BJ (cell line): ENCODE measurements at regions of chr12 and their contacts with region 1.

Region 1: GRCh38 chr12:52213512-52214420 is 19.3 kb upstream of the KRT7 start:
- DNase-seq: no peak
- H3K4me3 ChIP-seq: no peak overlapping the region
- H3K27me3 ChIP-seq: no peaks in the 10 kb centered on the region
- CTCF ChIP-seq: peak; percentile 100

Region 2: GRCh38 chr12:52069327-52070184 is 144.2 kb before region 1 on chr12 and contains the start of gene ATG101:
- CTCF ChIA-PET with region 1: no interaction called
- POLR2A ChIA-PET with region 1: no interaction called
- DNase-seq: peak; percentile 45
- H3K4me3 ChIP-seq: peak within 1 kb of the TSS; percentile 58
- H3K27me3 ChIP-seq: no peaks in the 10 kb centered on the region
- CTCF ChIP-seq: peak; percentile 91
- polyA plus RNA-seq, gene ATG101: 115 and 163 TPM in 2 replicates

Region 3: DNA sequence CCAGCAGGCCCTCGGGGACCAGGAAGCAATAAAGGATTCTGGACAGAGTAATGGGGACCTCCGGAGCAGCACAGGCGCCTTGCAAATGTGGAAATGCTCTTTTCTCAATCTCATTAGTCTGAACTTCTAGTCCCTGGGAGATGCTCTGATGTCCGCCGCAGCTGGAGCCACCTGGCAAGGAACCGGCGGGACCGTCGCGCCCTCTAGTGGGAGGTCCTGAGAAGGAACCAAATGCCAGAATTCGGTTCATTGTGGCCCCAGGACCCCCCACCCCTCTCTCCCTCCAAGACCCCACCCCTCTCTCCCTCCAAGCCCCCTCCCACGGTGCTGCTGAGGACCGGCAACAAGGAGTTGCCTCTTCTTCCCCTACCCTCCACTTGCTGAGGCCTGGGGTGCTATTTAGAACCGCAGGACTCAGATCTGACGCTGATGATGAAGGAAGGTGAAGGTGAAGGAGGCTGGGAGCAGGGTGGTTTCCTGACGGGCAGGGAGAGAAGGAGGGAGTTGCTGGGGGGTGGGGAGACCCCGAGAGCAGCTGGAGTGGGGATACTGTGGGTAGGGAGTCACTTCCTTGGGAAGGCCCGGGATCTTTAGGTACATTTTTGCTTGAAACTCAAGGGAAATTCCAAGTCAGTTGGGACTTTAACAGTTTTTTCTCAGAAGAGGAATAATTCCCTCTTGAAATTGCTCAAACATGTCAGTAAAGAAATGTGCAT is 91.8 kb before region 1 on chr12:
- CTCF ChIA-PET with region 1: no interaction called
- POLR2A ChIA-PET with region 1: no interaction called
- DNase-seq: no peak
- H3K4me3 ChIP-seq: no peak overlapping the region
- H3K27me3 ChIP-seq: peaks cover 2% of the 10 kb centered on the region
- CTCF ChIP-seq: peak; percentile 83

Region 4: DNA sequence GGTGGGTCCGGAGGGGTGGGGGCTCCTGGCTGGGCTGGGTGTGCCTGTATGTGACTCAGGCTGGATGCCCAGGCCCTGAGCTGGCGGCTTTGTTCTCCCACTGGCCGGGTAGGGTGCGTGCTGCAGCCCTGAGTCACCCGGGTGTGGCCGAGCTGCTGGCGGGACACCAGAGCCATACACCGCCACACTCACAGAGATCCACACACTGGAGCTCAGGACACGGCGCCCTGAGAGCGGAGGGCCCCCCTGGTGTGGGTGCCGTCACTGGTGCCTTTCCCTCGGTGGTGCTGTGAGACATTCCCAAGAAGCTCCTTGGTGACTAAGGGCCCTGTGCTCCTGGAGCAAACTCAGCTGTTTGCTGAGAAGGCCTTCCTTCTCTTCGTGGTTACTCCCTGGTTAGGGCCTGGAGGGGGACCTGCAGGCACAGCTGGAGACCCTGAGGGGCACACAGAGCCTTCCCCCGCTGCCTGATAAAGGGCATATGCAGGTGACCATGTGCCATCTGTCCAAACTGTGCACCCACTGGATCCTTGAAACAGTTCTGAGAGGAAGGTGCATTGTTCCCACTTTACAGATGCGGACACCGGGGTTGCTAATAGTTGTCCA is 66.3 kb before region 1 on chr12:
- CTCF ChIA-PET with region 1: interaction called, 22 read pairs
- POLR2A ChIA-PET with region 1: no interaction called
- DNase-seq: peak; percentile 97
- H3K4me3 ChIP-seq: no peak overlapping the region
- H3K27me3 ChIP-seq: no peaks in the 10 kb centered on the region
- CTCF ChIP-seq: no peak

Region 5: GRCh38 chr12:52171950-52172512 is 41.7 kb before region 1 on chr12:
- CTCF ChIA-PET with region 1: interaction called, 22 read pairs
- POLR2A ChIA-PET with region 1: interaction called, 5 read pairs
- DNase-seq: no peak
- H3K4me3 ChIP-seq: no peak overlapping the region
- H3K27me3 ChIP-seq: no peaks in the 10 kb centered on the region
- CTCF ChIP-seq: peak; percentile 45

Region 6: DNA sequence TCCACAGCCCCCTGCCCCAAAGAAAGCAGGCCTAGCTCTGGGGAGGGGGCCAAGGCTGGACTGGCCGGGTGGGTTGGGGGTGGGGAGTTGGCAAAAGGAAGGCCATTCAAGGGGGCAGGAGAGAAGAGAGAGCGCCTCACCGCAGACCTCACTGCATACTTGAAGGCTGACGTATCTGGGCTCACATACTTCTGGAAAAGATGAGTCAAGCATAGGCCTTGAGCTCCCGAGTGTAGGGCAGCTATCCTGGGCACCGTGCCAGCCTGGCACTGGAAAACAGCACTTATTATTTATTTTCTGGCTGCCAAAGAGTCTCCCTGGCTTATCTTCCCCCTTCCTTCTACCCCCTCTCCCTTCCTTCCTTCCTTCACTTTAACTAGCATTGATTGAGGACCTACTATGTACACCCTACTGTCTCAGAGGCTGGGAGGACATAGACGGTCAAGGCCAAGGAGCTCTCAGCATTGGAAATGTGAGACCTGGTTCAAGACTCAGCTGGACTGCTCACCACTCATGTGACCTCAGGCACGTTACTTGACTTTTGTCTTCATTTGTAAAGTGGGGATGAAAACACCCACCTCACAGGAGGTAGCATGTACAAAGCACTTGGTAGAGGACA is 21.5 kb before region 1 on chr12:
- CTCF ChIA-PET with region 1: interaction called, 45 read pairs
- POLR2A ChIA-PET with region 1: no interaction called
- DNase-seq: peak; percentile 92
- H3K4me3 ChIP-seq: no peak overlapping the region
- H3K27me3 ChIP-seq: no peaks in the 10 kb centered on the region
- CTCF ChIP-seq: no peak

Region 7: GRCh38 chr12:52203075-52203921 is 10.5 kb before region 1 on chr12:
- CTCF ChIA-PET with region 1: interaction called, 20 read pairs
- POLR2A ChIA-PET with region 1: no interaction called
- DNase-seq: peak; percentile 65
- H3K4me3 ChIP-seq: no peak overlapping the region
- H3K27me3 ChIP-seq: no peaks in the 10 kb centered on the region
- CTCF ChIP-seq: no peak

Region 8: DNA sequence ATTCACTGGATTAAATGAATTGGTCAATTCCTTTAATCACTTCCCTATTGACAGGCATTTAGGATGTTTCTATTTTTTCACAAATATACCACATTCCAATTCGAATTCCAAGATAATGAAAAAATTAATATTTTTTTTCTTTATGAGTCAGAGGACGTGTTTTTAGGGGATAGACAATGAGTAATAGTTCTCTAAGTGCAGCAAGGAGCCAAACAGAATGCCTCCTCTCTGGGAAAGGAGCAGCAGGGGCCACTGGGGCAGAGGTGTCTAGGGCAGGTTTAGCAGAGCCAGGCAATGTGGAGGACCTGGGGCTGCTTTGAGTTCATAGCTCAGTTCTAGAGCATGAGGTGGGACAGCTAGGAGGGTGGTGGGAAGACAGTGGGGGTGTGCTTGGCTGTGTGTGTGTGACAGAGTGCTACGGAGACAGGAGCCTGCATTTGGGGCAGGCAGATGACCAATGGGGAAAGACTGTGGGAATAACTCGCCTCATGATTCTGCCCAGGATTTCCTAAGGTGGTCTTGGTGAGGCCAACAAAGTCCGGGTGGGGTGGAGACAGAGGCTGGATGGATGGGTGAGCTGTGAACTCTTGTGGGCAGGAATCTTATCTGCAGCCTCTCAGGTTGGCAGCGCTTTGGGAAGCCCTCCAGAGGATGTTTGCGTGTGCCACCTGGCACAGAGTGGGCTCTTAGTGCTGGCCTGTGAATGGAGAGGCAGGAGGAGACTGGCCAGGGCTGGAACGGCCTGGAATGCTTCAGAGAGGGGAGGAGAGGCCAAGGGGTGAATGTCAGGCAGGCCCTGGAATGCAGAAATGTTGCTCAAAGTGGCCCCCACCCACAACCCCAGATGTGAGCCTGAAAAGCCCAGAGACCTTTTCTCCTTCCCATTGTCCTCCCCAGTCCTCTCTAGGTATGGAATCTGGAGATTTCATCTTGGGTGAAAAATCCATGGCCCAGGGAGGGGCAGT is 16.8 kb after region 1 on chr12:
- CTCF ChIA-PET with region 1: interaction called, 23 read pairs
- POLR2A ChIA-PET with region 1: no interaction called
- DNase-seq: peak; percentile 80
- H3K4me3 ChIP-seq: no peak overlapping the region
- H3K27me3 ChIP-seq: no peaks in the 10 kb centered on the region
- CTCF ChIP-seq: no peak

Region 9: GRCh38 chr12:52404956-52405355 is 191.2 kb after region 1 on chr12:
- CTCF ChIA-PET with region 1: no interaction called
- POLR2A ChIA-PET with region 1: no interaction called
- DNase-seq: no peak
- H3K4me3 ChIP-seq: no peak overlapping the region
- H3K27me3 ChIP-seq: peaks cover 8% of the 10 kb centered on the region
- CTCF ChIP-seq: no peak